Kidney (tissue), 22 donors: ENCODE measurements at regions of chr12 and their contacts with region 1.

Region 1: GRCh38 chr12:53746592-53747092 is 5.1 kb downstream of the CISTR start:
- DNase-seq: peak; percentile 95 to 96 (median 95)
- H3K4me3 ChIP-seq: no peak overlapping the region
- H3K27ac ChIP-seq: no peak overlapping the region
- H3K4me1 ChIP-seq: peaks cover 0 to 13% (median 6%) of the 10 kb centered on the region in 3 donors
- H3K27me3 ChIP-seq: peaks cover 24% of the 10 kb centered on the region
- CTCF ChIP-seq: peak; percentile 100

Region 2: GRCh38 chr12:53365245-53365904 is 381.3 kb before region 1 on chr12:
- intact Hi-C with region 1: no loop called
- DNase-seq: peak in 1 of 5 donors; percentile 0
- H3K4me3 ChIP-seq: no peak overlapping the region
- H3K27ac ChIP-seq: peak overlapping the region in 1 of 2 donors; percentile 63
- H3K4me1 ChIP-seq: peaks cover 0 to 6% (median under 1%) of the 10 kb centered on the region in 3 donors
- H3K27me3 ChIP-seq: no peaks in the 10 kb centered on the region
- CTCF ChIP-seq: no peak

Region 3: GRCh38 chr12:53701518-53702260 is 45.0 kb before region 1 on chr12:
- intact Hi-C with region 1: loop called (anchors 5 kb)
- DNase-seq: peak; percentile 76 to 90 (median 87)
- H3K4me3 ChIP-seq: no peak overlapping the region
- H3K27ac ChIP-seq: no peak overlapping the region
- H3K4me1 ChIP-seq: peaks cover 0 to under 1% (median 0%) of the 10 kb centered on the region in 3 donors
- H3K27me3 ChIP-seq: peaks cover 20% of the 10 kb centered on the region
- CTCF ChIP-seq: peak; percentile 97